Endothelial cell of umbilical vein (primary cell): ENCODE measurements at regions of chr2 and their contacts with region 1.

Region 1: GRCh38 chr2:163345908-163346573 is 389.8 kb downstream of the FIGN start:
- DNase-seq: peak; percentile 80
- H3K4me3 ChIP-seq: no peak overlapping the region
- H3K27ac ChIP-seq: no peak overlapping the region
- H3K4me1 ChIP-seq: peaks cover 53% of the 10 kb centered on the region
- H3K27me3 ChIP-seq: no peaks in the 10 kb centered on the region
- CTCF ChIP-seq: peak; percentile 52 to 57
- POLR2A ChIP-seq: no peak

Region 2: GRCh38 chr2:163182764-163183354 is 163.2 kb before region 1 on chr2:
- CTCF ChIA-PET with region 1: interaction called, 23 read pairs
- POLR2A ChIA-PET with region 1: no interaction called
- dilution Hi-C with region 1: no loop called
- intact Hi-C with region 1: no loop called
- DNase-seq: peak; percentile 35
- H3K4me3 ChIP-seq: no peak overlapping the region
- H3K27ac ChIP-seq: no peak overlapping the region
- H3K4me1 ChIP-seq: peaks cover 8% of the 10 kb centered on the region
- H3K27me3 ChIP-seq: no peaks in the 10 kb centered on the region
- CTCF ChIP-seq: peak; percentile 33 to 38
- POLR2A ChIP-seq: no peak

Region 3: DNA sequence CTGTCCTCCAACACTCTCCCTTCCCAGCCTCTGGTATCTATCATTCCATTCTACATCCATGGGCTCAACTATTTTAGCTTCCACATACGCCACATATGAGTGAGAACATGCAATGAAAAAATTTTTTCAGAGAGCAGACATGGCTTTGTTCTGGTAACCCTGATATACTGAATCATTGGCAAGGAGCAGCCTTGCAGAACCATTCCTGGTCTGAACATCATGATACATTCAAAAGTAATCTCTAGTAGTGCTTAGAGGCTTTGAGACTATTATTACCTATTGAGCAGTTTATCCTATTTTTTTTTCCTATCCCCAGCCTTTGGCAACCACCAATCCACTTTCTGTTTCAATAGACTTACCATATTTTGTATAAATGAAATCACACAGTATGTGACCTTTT is 114.4 kb before region 1 on chr2:
- CTCF ChIA-PET with region 1: no interaction called
- POLR2A ChIA-PET with region 1: no interaction called
- dilution Hi-C with region 1: no loop called
- intact Hi-C with region 1: no loop called
- DNase-seq: no peak
- H3K4me3 ChIP-seq: no peak overlapping the region
- H3K27ac ChIP-seq: no peak overlapping the region
- H3K4me1 ChIP-seq: no peaks in the 10 kb centered on the region
- H3K27me3 ChIP-seq: no peaks in the 10 kb centered on the region
- CTCF ChIP-seq: no peak
- POLR2A ChIP-seq: no peak

Region 4: GRCh38 chr2:163291790-163292189 is 54.3 kb before region 1 on chr2:
- CTCF ChIA-PET with region 1: no interaction called
- POLR2A ChIA-PET with region 1: no interaction called
- dilution Hi-C with region 1: no loop called
- intact Hi-C with region 1: no loop called
- DNase-seq: no peak
- H3K4me3 ChIP-seq: no peak overlapping the region
- H3K27ac ChIP-seq: no peak overlapping the region
- H3K4me1 ChIP-seq: no peaks in the 10 kb centered on the region
- H3K27me3 ChIP-seq: no peaks in the 10 kb centered on the region
- CTCF ChIP-seq: no peak
- POLR2A ChIP-seq: no peak

Region 5: GRCh38 chr2:163551616-163552373 is 205.8 kb after region 1 on chr2:
- CTCF ChIA-PET with region 1: interaction called, 3 read pairs
- POLR2A ChIA-PET with region 1: no interaction called
- dilution Hi-C with region 1: no loop called
- intact Hi-C with region 1: loop called (anchors 1 kb)
- DNase-seq: no peak
- H3K4me3 ChIP-seq: no peak overlapping the region
- H3K27ac ChIP-seq: no peak overlapping the region
- H3K4me1 ChIP-seq: no peaks in the 10 kb centered on the region
- H3K27me3 ChIP-seq: no peaks in the 10 kb centered on the region
- CTCF ChIP-seq: no peak
- POLR2A ChIP-seq: no peak

Region 6: DNA sequence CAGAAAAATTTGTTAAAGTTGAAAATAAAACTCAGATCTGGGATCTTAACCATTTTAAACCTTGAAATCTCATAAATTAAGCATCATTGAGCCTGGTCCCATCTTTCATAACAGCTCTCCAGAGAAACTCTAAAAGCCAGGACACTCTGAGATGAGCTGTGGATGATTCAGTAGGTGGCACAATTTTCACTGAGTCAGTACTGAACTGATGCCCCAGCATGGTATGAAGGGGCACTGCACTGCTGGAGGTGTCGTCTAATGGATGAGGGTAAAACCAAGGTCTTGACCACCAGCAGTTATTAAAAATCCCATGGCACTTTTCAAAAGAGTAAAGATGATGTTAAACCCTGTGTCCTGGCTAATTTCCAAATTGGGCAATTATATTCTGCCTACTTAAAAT is 219.2 kb after region 1 on chr2:
- CTCF ChIA-PET with region 1: no interaction called
- POLR2A ChIA-PET with region 1: no interaction called
- dilution Hi-C with region 1: no loop called
- intact Hi-C with region 1: no loop called
- DNase-seq: no peak
- H3K4me3 ChIP-seq: no peak overlapping the region
- H3K27ac ChIP-seq: no peak overlapping the region
- H3K4me1 ChIP-seq: no peaks in the 10 kb centered on the region
- H3K27me3 ChIP-seq: no peaks in the 10 kb centered on the region
- CTCF ChIP-seq: no peak
- POLR2A ChIP-seq: no peak

Region 7: DNA sequence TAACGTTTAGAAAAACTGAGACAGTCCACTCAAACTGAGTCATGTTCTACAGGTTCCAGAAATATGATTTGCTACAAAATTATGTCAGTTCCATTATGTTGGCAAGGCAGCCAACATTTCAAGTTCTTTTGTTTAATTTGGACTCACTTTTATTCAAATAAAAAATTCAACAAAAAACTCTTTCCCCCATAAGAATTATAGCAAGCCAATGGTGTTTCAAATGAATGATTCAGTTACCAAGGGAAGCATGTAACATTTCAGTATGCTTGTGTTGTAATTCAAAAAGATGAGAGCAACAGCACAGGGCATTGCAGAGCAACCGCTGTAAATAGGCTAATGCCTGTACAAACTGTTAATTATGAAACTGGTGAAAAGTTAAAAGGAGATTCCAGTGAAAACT is 249.0 kb after region 1 on chr2:
- CTCF ChIA-PET with region 1: no interaction called
- POLR2A ChIA-PET with region 1: no interaction called
- dilution Hi-C with region 1: no loop called
- intact Hi-C with region 1: no loop called
- DNase-seq: no peak
- H3K4me3 ChIP-seq: no peak overlapping the region
- H3K27ac ChIP-seq: no peak overlapping the region
- H3K4me1 ChIP-seq: no peaks in the 10 kb centered on the region
- H3K27me3 ChIP-seq: no peaks in the 10 kb centered on the region
- CTCF ChIP-seq: no peak
- POLR2A ChIP-seq: no peak

Region 8: GRCh38 chr2:163735685-163736432 is 389.8 kb after region 1 on chr2 and contains the start of gene FIGN:
- CTCF ChIA-PET with region 1: interaction called, 16 read pairs
- POLR2A ChIA-PET with region 1: interaction called, 3 read pairs
- dilution Hi-C with region 1: no loop called
- intact Hi-C with region 1: loop called (anchors 1 kb)
- DNase-seq: peak; percentile 91
- H3K4me3 ChIP-seq: peak within 1 kb of the TSS; percentile 66 to 96 (median 94)
- H3K27ac ChIP-seq: peak within 1 kb of the TSS; percentile 72
- H3K4me1 ChIP-seq: peaks cover 11% of the 10 kb centered on the region
- H3K27me3 ChIP-seq: no peaks in the 10 kb centered on the region
- CTCF ChIP-seq: no peak
- POLR2A ChIP-seq: peak; percentile 60
- total RNA-seq, gene FIGN: 6.6 and 8.1 TPM in 2 replicates

Region 9: DNA sequence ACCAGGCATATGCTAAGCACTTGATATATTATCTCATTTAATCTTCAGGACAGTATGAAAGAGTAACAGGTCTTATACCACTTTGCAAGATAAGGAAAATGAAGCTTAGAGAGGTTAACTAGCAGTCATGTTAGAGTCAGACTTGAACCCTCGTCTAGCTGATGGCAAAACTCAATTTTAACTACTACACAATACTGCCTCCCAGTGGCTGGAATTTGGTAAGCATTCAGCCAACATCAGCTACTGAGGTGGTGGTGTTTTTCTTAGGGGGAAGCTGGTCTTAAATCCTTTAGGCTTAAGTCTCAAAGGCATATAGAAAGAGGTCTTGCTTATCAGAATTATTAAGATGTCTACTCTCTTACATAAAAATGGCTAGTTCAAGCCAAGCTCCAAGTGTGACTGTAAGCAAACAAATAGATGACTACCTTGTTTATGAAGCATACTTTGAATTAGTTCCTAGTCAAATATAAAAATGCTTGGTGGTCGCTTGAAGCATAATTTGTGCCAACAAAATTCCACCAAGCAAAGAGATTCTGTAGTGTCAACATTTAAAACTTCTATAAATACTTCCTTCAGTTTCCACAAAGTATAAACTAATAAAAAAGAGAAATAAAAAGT is 715.2 kb after region 1 on chr2:
- CTCF ChIA-PET with region 1: interaction called, 72 read pairs
- POLR2A ChIA-PET with region 1: no interaction called
- dilution Hi-C with region 1: no loop called
- intact Hi-C with region 1: loop called (anchors 1 kb)
- DNase-seq: peak; percentile 61
- H3K4me3 ChIP-seq: no peak overlapping the region
- H3K27ac ChIP-seq: no peak overlapping the region
- H3K4me1 ChIP-seq: no peaks in the 10 kb centered on the region
- H3K27me3 ChIP-seq: no peaks in the 10 kb centered on the region
- CTCF ChIP-seq: peak; percentile 53 to 58
- POLR2A ChIP-seq: no peak

Region 10: DNA sequence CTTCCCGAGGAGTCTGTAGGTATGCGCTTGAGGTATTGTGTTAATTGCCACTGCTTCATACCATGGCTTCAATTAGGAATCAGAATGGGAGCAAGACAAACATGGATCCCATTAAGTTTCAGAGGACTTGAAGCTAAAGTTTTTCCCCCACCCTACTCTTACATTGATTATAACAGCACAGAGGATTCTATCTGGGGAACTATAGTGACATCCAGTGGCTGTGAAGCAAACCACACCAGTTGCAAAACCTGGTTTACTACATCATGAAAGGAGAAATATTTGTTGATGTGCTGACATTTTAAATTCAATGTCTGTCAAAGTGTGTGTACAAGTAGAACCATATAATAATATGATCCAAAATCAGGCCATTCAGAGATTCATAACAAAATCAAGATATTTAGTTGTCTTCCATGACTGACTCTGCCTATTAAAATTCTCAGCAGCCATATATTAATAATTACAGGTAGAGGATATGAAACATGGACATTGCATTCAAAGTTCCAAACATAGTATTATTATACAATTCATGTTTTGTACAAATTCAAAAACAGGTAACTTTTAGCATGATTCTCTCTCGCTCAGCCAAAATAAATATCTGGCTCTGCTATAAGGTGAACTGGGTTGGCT is 1192.3 kb after region 1 on chr2:
- CTCF ChIA-PET with region 1: interaction called, 5 read pairs
- POLR2A ChIA-PET with region 1: no interaction called
- dilution Hi-C with region 1: no loop called
- intact Hi-C with region 1: loop called (anchors 5 kb)
- DNase-seq: peak; percentile 56
- H3K4me3 ChIP-seq: no peak overlapping the region
- H3K27ac ChIP-seq: no peak overlapping the region
- H3K4me1 ChIP-seq: peaks cover 5% of the 10 kb centered on the region
- H3K27me3 ChIP-seq: no peaks in the 10 kb centered on the region
- CTCF ChIP-seq: peak; percentile 58 to 68
- POLR2A ChIP-seq: no peak